Gastrocnemius medialis (tissue), 4 donors: ENCODE measurements at regions of chrX and their contacts with region 1.

Region 1: GRCh38 chrX:78555401-78555980 is 103.6 kb downstream of the RTL3 start:
- DNase-seq: no peak
- ATAC-seq: no peak
- H3K4me3 ChIP-seq: no peak overlapping the region
- H3K27ac ChIP-seq: no peak overlapping the region
- H3K4me1 ChIP-seq: no peaks in the 10 kb centered on the region
- H3K27me3 ChIP-seq: no peaks in the 10 kb centered on the region
- CTCF ChIP-seq: peak in 2 of 5 experiments; percentile 24 to 30
- POLR2A ChIP-seq: no peak

Region 2: GRCh38 chrX:78496483-78496882 is 59.0 kb before region 1 on chrX:
- in situ Hi-C with region 1: no loop called
- intact Hi-C with region 1: no loop called
- DNase-seq: no peak
- ATAC-seq: no peak
- H3K4me3 ChIP-seq: no peak overlapping the region
- H3K27ac ChIP-seq: no peak overlapping the region
- H3K4me1 ChIP-seq: no peaks in the 10 kb centered on the region
- H3K27me3 ChIP-seq: no peaks in the 10 kb centered on the region
- CTCF ChIP-seq: no peak
- POLR2A ChIP-seq: no peak

Region 3: GRCh38 chrX:79081895-79082512 is 526.5 kb after region 1 on chrX:
- in situ Hi-C with region 1: loop called in 1 of 4 experiments (anchors 25 kb)
- intact Hi-C with region 1: loop called (anchors 10 kb)
- DNase-seq: no peak
- ATAC-seq: no peak
- H3K4me3 ChIP-seq: no peak overlapping the region
- H3K27ac ChIP-seq: no peak overlapping the region
- H3K4me1 ChIP-seq: no peaks in the 10 kb centered on the region
- H3K27me3 ChIP-seq: no peaks in the 10 kb centered on the region
- CTCF ChIP-seq: peak in 4 of 5 experiments; percentile 7 to 55 (median 42)
- POLR2A ChIP-seq: no peak